ENCODE measurements at regions of chr1 and their contacts with region 1.

Region 1: GRCh38 chr1:212070720-212071302 is 35.3 kb downstream of the DTL start:
- DNase-seq: peak in 2 of 4 donors; percentile 49 to 62
- ATAC-seq: peak; percentile 92
- H3K4me3 ChIP-seq: no peak overlapping the region
- H3K27ac ChIP-seq: no peak overlapping the region
- H3K4me1 ChIP-seq: peaks cover 0 to 6% of the 10 kb centered on the region in 2 donors
- H3K27me3 ChIP-seq: no peaks in the 10 kb centered on the region
- CTCF ChIP-seq: peak; percentile 64 to 66

Region 2: GRCh38 chr1:212291505-212292134 is 220.8 kb after region 1 on chr1:
- intact Hi-C with region 1: loop called in 1 of 2 experiments (anchors 5 kb)
- DNase-seq: peak in 1 of 4 donors; percentile 65
- ATAC-seq: peak; percentile 73
- H3K4me3 ChIP-seq: no peak overlapping the region
- H3K27ac ChIP-seq: peak overlapping the region in 1 of 2 donors; percentile 2
- H3K4me1 ChIP-seq: peaks cover 24 to 93% of the 10 kb centered on the region in 2 donors
- H3K27me3 ChIP-seq: no peaks in the 10 kb centered on the region
- CTCF ChIP-seq: peak; percentile 47 to 50

Region 3: DNA sequence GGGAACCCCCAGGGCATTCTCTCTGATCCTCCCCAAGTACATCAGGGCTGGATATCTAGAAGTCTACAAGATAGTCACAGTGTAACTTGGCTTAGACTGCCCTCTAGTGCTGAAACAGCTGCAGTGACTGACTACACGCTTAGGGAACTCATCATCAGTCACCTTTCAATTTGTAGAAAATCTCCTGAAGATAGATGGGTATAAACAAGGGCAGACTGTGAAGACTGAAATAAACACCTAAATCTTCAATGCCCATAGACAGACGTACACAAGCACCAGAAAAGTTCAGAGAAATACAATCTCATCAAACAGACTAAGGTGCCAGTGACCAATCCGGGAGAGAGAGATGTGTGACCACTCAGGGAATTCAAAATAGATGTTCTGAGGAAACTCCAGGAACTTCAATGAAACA is 297.3 kb after region 1 on chr1:
- intact Hi-C with region 1: loop called in 1 of 2 experiments (anchors 5 kb)
- DNase-seq: peak in 2 of 4 donors; percentile 18 to 45
- ATAC-seq: peak; percentile 97
- H3K4me3 ChIP-seq: no peak overlapping the region
- H3K27ac ChIP-seq: no peak overlapping the region
- H3K4me1 ChIP-seq: no peaks in the 10 kb centered on the region
- H3K27me3 ChIP-seq: no peaks in the 10 kb centered on the region
- CTCF ChIP-seq: peak; percentile 71 to 80

Measured in left lung (tissue), 14 donors.